ENCODE measurements at regions of chr11 and their contacts with region 1.

Region 1: GRCh38 chr11:72080975-72081644 is 460 bp downstream of the LRRC51 start:
- DNase-seq: no peak
- CTCF ChIP-seq: no peak

Region 2: GRCh38 chr11:72069787-72070251 is 11.3 kb before region 1 on chr11:
- CTCF ChIA-PET with region 1: interaction called, 14 read pairs
- POLR2A ChIA-PET with region 1: no interaction called
- DNase-seq: peak; percentile 26
- CTCF ChIP-seq: no peak

Region 3: GRCh38 chr11:72102946-72103753 is 22.0 kb after region 1 on chr11 and contains the start of gene LAMTOR1:
- CTCF ChIA-PET with region 1: interaction called, 52 read pairs
- POLR2A ChIA-PET with region 1: interaction called, 3 read pairs
- DNase-seq: peak; percentile 97
- CTCF ChIP-seq: no peak